ENCODE measurements at regions of chr17 and their contacts with region 1.

Region 1: GRCh38 chr17:39863918-39864746 is at the start of gene IKZF3:
- DNase-seq: peak; percentile 69 to 87 (median 76)
- ATAC-seq: peak; percentile 89
- H3K4me3 ChIP-seq: peak within 1 kb of the TSS; percentile 69
- H3K4me3 Mint-ChIP-seq: peak within 1 kb of the TSS; percentile 86 to 98 (median 94)
- H3K27ac ChIP-seq: peak within 1 kb of the TSS; percentile 99
- H3K27ac Mint-ChIP-seq: peak within 1 kb of the TSS; percentile 86 to 98 (median 97)
- H3K4me1 ChIP-seq: peaks cover 27 to 33% of the 10 kb centered on the region in 2 donors
- H3K4me1 Mint-ChIP-seq: peaks cover 22 to 88% (median 68%) of the 10 kb centered on the region in 7 donors
- H3K27me3 ChIP-seq: no peaks in the 10 kb centered on the region
- H3K27me3 Mint-ChIP-seq: no peaks in the 10 kb centered on the region
- total RNA-seq, gene IKZF3: 26.1 to 77.8 (median 61.1) TPM

Region 2: DNA sequence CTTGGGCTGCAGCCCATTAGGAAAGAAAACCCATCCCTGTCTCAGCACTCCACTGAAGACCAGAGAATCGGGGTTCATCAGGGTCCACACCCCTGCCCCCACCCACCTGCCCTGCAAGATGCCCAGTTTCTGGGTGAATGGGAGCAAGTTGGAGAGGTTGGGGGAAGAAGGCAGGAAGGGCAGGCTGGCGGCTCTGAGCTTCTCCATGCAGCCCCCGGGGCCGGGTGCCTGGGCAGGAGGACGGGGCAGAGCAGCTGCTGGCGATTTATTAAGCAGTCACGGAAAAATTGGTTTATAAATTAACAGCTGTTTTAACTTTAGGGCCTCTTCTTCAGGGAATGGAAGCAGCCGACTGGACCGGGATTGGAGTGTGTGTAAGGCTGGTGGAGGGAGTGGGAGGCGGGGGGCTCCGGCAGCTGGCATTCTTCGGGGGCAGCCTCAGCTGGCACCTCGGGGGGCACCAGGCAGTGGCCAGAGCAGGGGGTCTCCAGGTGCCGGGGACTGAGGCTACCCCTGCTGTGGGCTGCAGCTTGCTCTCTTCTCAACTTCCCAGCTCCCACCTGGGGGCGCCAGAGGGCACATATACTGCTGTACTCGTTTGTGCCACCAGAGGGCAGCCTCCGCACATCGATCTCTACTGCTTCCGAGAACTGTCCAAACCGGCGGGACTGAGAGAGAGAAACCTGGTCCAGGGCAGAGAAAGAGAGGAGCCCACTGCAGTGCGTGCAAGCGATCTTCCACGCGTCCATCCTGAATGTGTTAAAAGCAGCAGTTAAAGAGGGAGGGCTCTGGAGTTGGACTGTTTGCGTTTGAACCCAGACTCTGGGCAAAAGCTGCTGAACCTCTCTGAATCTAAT is 242.4 kb before region 1 on chr17:
- CTCF ChIA-PET with region 1: interaction called, 12 read pairs
- POLR2A ChIA-PET with region 1: interaction called, 5 read pairs
- intact Hi-C with region 1: loop called (anchors 1 kb)
- DNase-seq: peak; percentile 74 to 95 (median 86)
- ATAC-seq: peak; percentile 94
- H3K4me3 ChIP-seq: peak overlapping the region; percentile 41
- H3K4me3 Mint-ChIP-seq: peak overlapping the region in 8 of 10 donors; percentile 34 to 82 (median 58)
- H3K27ac ChIP-seq: no peak overlapping the region
- H3K27ac Mint-ChIP-seq: peak overlapping the region in 4 of 9 donors; percentile 10 to 74 (median 66)
- H3K4me1 ChIP-seq: peaks cover 12 to 26% of the 10 kb centered on the region in 2 donors
- H3K4me1 Mint-ChIP-seq: peaks cover 15 to 38% (median 24%) of the 10 kb centered on the region in 7 donors
- H3K27me3 ChIP-seq: peaks cover 3 to 7% of the 10 kb centered on the region in 2 donors
- H3K27me3 Mint-ChIP-seq: peaks cover 5 to 69% (median 18%) of the 10 kb centered on the region in 5 donors

Region 3: GRCh38 chr17:39769974-39770587 is 94.1 kb before region 1 on chr17:
- CTCF ChIA-PET with region 1: interaction called, 3 read pairs
- POLR2A ChIA-PET with region 1: interaction called, 7 read pairs
- intact Hi-C with region 1: loop called (anchors 1 to 5 kb)
- DNase-seq: peak in 7 of 9 donors; percentile 46 to 81 (median 63)
- ATAC-seq: peak; percentile 81
- H3K4me3 ChIP-seq: no peak overlapping the region
- H3K4me3 Mint-ChIP-seq: peak overlapping the region; percentile 29 to 83 (median 57)
- H3K27ac ChIP-seq: peak overlapping the region; percentile 71
- H3K27ac Mint-ChIP-seq: peak overlapping the region; percentile 78 to 98 (median 94)
- H3K4me1 ChIP-seq: peaks cover 77 to 92% of the 10 kb centered on the region in 2 donors
- H3K4me1 Mint-ChIP-seq: peaks cover 73 to 99% (median 98%) of the 10 kb centered on the region in 7 donors
- H3K27me3 ChIP-seq: no peaks in the 10 kb centered on the region
- H3K27me3 Mint-ChIP-seq: no peaks in the 10 kb centered on the region

Region 4: GRCh38 chr17:39794249-39794970 is 69.7 kb before region 1 on chr17:
- CTCF ChIA-PET with region 1: interaction called, 3 read pairs
- POLR2A ChIA-PET with region 1: interaction called, 22 read pairs
- intact Hi-C with region 1: loop called in 1 of 2 experiments (anchors 5 kb)
- DNase-seq: peak in 7 of 9 donors; percentile 28 to 67 (median 44)
- ATAC-seq: peak; percentile 83
- H3K4me3 ChIP-seq: peak overlapping the region; percentile 2
- H3K4me3 Mint-ChIP-seq: peak overlapping the region; percentile 37 to 82 (median 76)
- H3K27ac ChIP-seq: peak overlapping the region; percentile 65
- H3K27ac Mint-ChIP-seq: peak overlapping the region; percentile 86 to 96 (median 93)
- H3K4me1 ChIP-seq: peaks cover 56 to 66% of the 10 kb centered on the region in 2 donors
- H3K4me1 Mint-ChIP-seq: peaks cover 49 to 86% (median 82%) of the 10 kb centered on the region in 7 donors
- H3K27me3 ChIP-seq: no peaks in the 10 kb centered on the region
- H3K27me3 Mint-ChIP-seq: no peaks in the 10 kb centered on the region

Region 5: GRCh38 chr17:39813631-39814030 is 50.5 kb before region 1 on chr17:
- CTCF ChIA-PET with region 1: interaction called, 19 read pairs
- POLR2A ChIA-PET with region 1: interaction called, 36 read pairs
- intact Hi-C with region 1: loop called (anchors 1 to 2 kb)
- DNase-seq: peak in 7 of 9 donors; percentile 62 to 89 (median 71)
- ATAC-seq: peak; percentile 97
- H3K4me3 ChIP-seq: peak overlapping the region; percentile 17
- H3K4me3 Mint-ChIP-seq: peak overlapping the region; percentile 68 to 87 (median 78)
- H3K27ac ChIP-seq: peak overlapping the region; percentile 75
- H3K27ac Mint-ChIP-seq: peak overlapping the region; percentile 83 to 97 (median 91)
- H3K4me1 ChIP-seq: peaks cover 43 to 59% of the 10 kb centered on the region in 2 donors
- H3K4me1 Mint-ChIP-seq: peaks cover 32 to 94% (median 78%) of the 10 kb centered on the region in 7 donors
- H3K27me3 ChIP-seq: no peaks in the 10 kb centered on the region
- H3K27me3 Mint-ChIP-seq: no peaks in the 10 kb centered on the region

Region 6: GRCh38 chr17:39845052-39845846 is 18.9 kb before region 1 on chr17:
- CTCF ChIA-PET with region 1: interaction called, 3 read pairs
- POLR2A ChIA-PET with region 1: interaction called, 30 read pairs
- intact Hi-C with region 1: loop called in 1 of 2 experiments (anchors 2 kb)
- DNase-seq: no peak
- ATAC-seq: no peak
- H3K4me3 ChIP-seq: no peak overlapping the region
- H3K4me3 Mint-ChIP-seq: peak overlapping the region in 3 of 10 donors; percentile 2 to 30 (median 12)
- H3K27ac ChIP-seq: peak overlapping the region; percentile 57
- H3K27ac Mint-ChIP-seq: peak overlapping the region in 8 of 9 donors; percentile 68 to 94 (median 87)
- H3K4me1 ChIP-seq: peaks cover 32 to 36% of the 10 kb centered on the region in 2 donors
- H3K4me1 Mint-ChIP-seq: peaks cover 38 to 94% (median 83%) of the 10 kb centered on the region in 7 donors
- H3K27me3 ChIP-seq: no peaks in the 10 kb centered on the region
- H3K27me3 Mint-ChIP-seq: no peaks in the 10 kb centered on the region

Region 7: DNA sequence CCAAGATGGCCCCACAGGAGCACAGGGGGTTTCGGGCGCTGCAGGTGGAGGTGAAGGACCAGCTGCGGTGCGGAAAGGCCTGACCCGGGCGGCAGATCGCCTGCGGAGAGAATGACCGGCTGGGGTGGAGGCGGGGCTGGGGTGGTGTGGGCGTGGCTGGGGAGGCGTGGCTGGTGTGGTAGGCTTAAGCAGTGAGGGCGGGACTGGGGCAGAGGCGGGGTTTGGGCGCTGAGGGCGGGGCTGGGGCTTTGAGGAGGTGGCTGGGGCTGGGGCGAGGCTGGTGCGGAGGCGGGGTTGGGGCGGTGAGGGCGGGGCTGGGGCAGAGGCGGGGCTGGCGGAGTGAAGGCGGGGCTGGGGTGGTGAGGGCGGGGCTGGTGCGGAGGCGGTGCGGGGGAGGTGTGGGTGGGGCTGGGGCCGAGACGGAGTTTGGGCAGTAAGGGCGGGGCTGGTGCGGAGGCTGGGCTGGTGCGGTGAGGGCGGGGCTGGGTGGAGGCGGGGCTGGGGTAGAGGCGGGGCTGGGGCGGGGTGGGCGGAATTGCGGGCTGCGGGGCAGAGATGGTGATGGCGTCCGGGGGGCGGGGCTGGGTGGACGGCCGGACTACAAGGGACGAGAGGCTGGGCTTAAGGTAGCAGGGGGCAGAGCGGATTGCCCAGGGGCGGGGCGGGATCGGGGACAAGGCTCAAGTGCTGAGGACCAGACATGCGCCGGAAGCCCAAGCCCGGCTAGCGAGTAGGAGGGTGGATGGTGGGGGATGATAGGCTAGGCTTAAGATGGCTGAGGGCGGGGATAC is 88.7 kb after region 1 on chr17:
- CTCF ChIA-PET with region 1: no interaction called
- POLR2A ChIA-PET with region 1: interaction called, 3 read pairs
- intact Hi-C with region 1: loop called in 1 of 2 experiments (anchors 2 kb)
- DNase-seq: peak; percentile 81 to 98 (median 90)
- ATAC-seq: peak; percentile 94
- H3K4me3 ChIP-seq: peak overlapping the region; percentile 71
- H3K4me3 Mint-ChIP-seq: peak overlapping the region; percentile 68 to 93 (median 82)
- H3K27ac ChIP-seq: peak overlapping the region; percentile 74
- H3K27ac Mint-ChIP-seq: peak overlapping the region; percentile 28 to 87 (median 72)
- H3K4me1 ChIP-seq: peaks cover 5 to 18% of the 10 kb centered on the region in 2 donors
- H3K4me1 Mint-ChIP-seq: peaks cover 1 to 43% (median 27%) of the 10 kb centered on the region in 7 donors
- H3K27me3 ChIP-seq: no peaks in the 10 kb centered on the region
- H3K27me3 Mint-ChIP-seq: peaks cover 0 to 7% (median 0%) of the 10 kb centered on the region in 5 donors

Region 8: GRCh38 chr17:40095944-40096791 is 232.0 kb after region 1 on chr17:
- CTCF ChIA-PET with region 1: no interaction called
- POLR2A ChIA-PET with region 1: no interaction called
- intact Hi-C with region 1: no loop called
- DNase-seq: peak; percentile 41 to 94 (median 89)
- ATAC-seq: peak; percentile 76
- H3K4me3 ChIP-seq: peak overlapping the region; percentile 58
- H3K4me3 Mint-ChIP-seq: peak overlapping the region; percentile 77 to 99 (median 84)
- H3K27ac ChIP-seq: peak overlapping the region; percentile 94
- H3K27ac Mint-ChIP-seq: peak overlapping the region; percentile 85 to 100 (median 95)
- H3K4me1 ChIP-seq: peaks cover 50 to 52% of the 10 kb centered on the region in 2 donors
- H3K4me1 Mint-ChIP-seq: peaks cover 51 to 86% (median 72%) of the 10 kb centered on the region in 7 donors
- H3K27me3 ChIP-seq: no peaks in the 10 kb centered on the region
- H3K27me3 Mint-ChIP-seq: no peaks in the 10 kb centered on the region